ENCODE measurements at regions of chr7 and their contacts with region 1.

Region 1: DNA sequence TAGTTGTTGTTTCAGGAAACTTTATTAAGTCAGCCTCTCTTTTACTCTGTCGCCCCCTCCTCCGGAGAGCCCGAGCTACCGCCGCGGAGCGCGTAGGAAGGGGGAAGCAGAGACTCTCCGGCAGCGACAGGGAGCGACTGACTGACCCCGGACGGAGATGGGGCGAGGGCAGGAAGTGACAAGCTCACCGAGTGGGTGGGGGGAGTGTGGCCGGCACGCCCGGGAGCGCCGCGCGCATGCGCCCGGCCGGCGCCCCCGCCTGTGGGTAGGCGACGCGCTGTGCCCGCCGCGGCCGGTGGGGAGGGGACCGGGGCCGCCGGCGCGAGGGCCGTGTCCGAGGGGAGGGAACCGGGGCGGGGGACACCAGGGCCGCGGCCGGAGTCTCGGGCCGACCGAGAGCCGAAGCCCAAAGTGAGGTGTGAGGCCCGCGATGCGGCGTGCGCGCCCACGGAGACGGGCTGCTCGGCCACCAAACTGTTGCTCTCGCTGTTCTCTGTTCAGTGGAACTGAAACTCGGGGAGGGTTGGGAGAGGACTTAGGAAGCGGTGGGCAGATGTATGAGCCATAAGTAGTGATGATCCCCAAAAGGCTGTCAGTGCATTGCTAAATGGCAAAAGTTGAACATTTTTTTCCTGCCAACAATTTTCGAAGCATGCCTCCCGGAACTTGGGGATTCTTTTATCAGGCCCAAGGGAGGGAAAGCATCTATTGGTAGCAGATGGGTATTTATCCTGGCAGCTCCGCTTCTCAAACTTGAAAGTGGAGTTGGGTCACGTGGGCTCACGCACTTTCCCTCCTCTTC is at the start of gene ZNF800:
- DNase-seq: peak; percentile 73 to 94 (median 86)
- ATAC-seq: peak; percentile 76
- H3K4me3 ChIP-seq: peak within 1 kb of the TSS; percentile 87 to 92
- H3K4me3 Mint-ChIP-seq: peak within 1 kb of the TSS; percentile 96
- H3K27ac ChIP-seq: peak within 1 kb of the TSS; percentile 95 to 99
- H3K27ac Mint-ChIP-seq: peak within 1 kb of the TSS; percentile 98
- H3K4me1 ChIP-seq: peaks cover 45% of the 10 kb centered on the region
- H3K4me1 Mint-ChIP-seq: peaks cover 61% of the 10 kb centered on the region
- H3K27me3 ChIP-seq: no peaks in the 10 kb centered on the region
- H3K27me3 Mint-ChIP-seq: no peaks in the 10 kb centered on the region
- CTCF ChIP-seq: no peak
- total RNA-seq, gene ZNF800: 80.7 to 82.5 TPM

Region 2: DNA sequence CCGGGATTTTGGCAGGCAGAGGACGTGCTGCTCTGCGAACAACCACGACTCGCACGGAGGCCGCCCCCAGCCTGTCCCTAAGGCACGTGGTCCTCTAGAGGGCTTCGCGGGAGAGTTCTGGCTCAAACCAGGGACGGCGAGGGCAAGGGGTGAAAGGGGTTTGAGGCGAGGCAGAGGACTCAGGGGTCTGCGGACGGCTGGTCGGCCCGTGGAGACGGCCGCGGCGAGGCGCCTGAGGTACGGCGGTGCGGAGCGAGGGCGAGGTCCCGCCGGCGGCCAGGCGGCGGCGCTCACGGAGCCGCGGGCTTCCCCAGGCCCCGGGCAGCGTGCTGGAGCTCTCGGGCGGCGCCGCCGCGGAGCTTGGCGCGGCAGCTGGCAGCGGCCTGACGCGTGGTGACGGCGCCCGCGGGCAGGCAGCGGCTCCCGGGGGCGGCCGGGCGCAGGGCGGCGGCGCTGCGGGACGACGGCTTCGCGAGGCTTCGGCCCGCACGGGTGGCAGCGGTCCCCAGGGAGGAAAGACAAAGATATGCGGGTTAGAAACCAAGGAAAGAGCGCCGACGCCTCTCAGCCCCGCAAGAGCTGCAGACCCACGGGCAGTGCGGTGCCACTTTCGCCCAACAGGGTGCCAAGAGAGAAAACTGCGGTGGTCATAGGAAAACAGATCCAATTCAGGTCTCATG is 45.1 kb before region 1 on chr7:
- CTCF ChIA-PET with region 1: interaction called, 24 read pairs
- POLR2A ChIA-PET with region 1: interaction called, 18 read pairs
- intact Hi-C with region 1: loop called (anchors 2 to 5 kb)
- DNase-seq: peak; percentile 45 to 88 (median 71)
- ATAC-seq: peak; percentile 98
- H3K4me3 ChIP-seq: peak overlapping the region; percentile 26 to 34
- H3K4me3 Mint-ChIP-seq: peak overlapping the region; percentile 72
- H3K27ac ChIP-seq: no peak overlapping the region
- H3K27ac Mint-ChIP-seq: no peak overlapping the region
- H3K4me1 ChIP-seq: peaks cover 3% of the 10 kb centered on the region
- H3K4me1 Mint-ChIP-seq: peaks cover 22% of the 10 kb centered on the region
- H3K27me3 ChIP-seq: no peaks in the 10 kb centered on the region
- H3K27me3 Mint-ChIP-seq: no peaks in the 10 kb centered on the region
- CTCF ChIP-seq: peak; percentile 43

Region 3: DNA sequence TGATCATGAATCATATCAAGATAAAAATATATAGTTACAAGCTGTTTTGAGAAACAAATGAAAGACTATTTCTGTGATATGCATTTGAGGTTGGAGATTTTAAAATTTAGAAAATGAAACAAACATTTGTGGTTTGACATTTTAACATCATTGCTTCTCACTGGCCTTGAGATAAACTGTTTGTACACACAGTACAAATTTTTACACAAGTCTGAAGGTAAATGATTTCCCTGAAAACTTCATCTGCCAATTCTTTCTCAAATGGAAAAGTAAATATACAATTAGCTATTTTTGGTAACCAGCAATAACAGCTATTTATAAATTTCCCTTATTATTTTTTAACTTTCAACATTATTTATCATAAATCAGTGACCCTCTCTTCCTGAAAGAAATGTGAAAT is 38.9 kb before region 1 on chr7:
- CTCF ChIA-PET with region 1: interaction called, 24 read pairs
- POLR2A ChIA-PET with region 1: interaction called, 18 read pairs
- intact Hi-C with region 1: loop called (anchors 2 to 5 kb)
- DNase-seq: no peak
- ATAC-seq: no peak
- H3K4me3 ChIP-seq: no peak overlapping the region
- H3K4me3 Mint-ChIP-seq: no peak overlapping the region
- H3K27ac ChIP-seq: no peak overlapping the region
- H3K27ac Mint-ChIP-seq: no peak overlapping the region
- H3K4me1 ChIP-seq: no peaks in the 10 kb centered on the region
- H3K4me1 Mint-ChIP-seq: peaks cover 23% of the 10 kb centered on the region
- H3K27me3 ChIP-seq: no peaks in the 10 kb centered on the region
- H3K27me3 Mint-ChIP-seq: no peaks in the 10 kb centered on the region
- CTCF ChIP-seq: no peak

Region 4: DNA sequence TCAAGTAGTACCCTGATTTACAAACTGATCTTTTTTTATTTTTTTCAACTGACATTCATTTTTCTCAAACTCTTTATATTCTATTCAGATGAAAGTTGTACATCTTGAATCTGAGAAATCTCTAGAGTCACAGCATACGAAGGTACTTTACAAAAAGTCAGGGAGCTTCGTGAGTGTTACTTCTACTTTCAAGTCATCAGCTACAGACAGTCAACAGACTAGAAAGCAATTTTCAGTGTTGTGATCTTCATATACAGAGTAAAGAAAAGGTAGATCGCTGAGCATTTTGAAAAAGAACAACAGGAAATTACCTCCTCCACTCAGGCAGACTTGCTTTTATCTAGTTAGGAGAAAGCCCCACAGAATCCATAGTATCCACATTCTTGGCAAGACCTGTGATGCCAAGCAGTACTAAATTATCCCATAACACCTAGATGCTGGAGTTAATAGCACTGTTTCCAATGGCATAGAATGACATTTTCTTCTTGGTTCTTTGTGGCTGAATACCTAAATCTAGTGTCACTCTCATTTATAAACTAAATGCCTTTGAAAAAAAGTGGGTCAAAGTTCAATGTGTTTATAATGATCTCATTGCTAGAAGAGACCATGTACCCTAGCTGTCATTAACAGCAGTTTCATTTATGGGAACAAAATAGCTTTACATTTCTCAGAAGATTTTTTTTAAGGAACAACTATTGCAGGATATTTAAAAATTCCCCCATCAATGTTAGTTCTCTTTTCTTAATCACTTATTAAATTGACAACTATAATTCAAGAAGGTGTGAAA is 11.7 kb after region 1 on chr7:
- CTCF ChIA-PET with region 1: interaction called, 3 read pairs
- POLR2A ChIA-PET with region 1: interaction called, 36 read pairs
- intact Hi-C with region 1: no loop called
- DNase-seq: peak in 2 of 9 experiments; percentile 15 to 56
- ATAC-seq: peak; percentile 77
- H3K4me3 ChIP-seq: no peak overlapping the region
- H3K4me3 Mint-ChIP-seq: peak overlapping the region; percentile 20
- H3K27ac ChIP-seq: peak overlapping the region; percentile 3 to 21
- H3K27ac Mint-ChIP-seq: peak overlapping the region; percentile 84
- H3K4me1 ChIP-seq: peaks cover 28% of the 10 kb centered on the region
- H3K4me1 Mint-ChIP-seq: peaks cover 30% of the 10 kb centered on the region
- H3K27me3 ChIP-seq: no peaks in the 10 kb centered on the region
- H3K27me3 Mint-ChIP-seq: no peaks in the 10 kb centered on the region
- CTCF ChIP-seq: no peak

Region 5: GRCh38 chr7:127413962-127414361 is 21.2 kb after region 1 on chr7:
- CTCF ChIA-PET with region 1: interaction called, 8 read pairs
- POLR2A ChIA-PET with region 1: interaction called, 29 read pairs
- intact Hi-C with region 1: loop called (anchors 1 kb)
- DNase-seq: peak in 2 of 9 experiments; percentile 52 to 77
- ATAC-seq: peak; percentile 79
- H3K4me3 ChIP-seq: peak overlapping the region in 1 of 2 experiments; percentile 12
- H3K4me3 Mint-ChIP-seq: peak overlapping the region; percentile 71
- H3K27ac ChIP-seq: peak overlapping the region; percentile 26 to 77
- H3K27ac Mint-ChIP-seq: peak overlapping the region; percentile 97
- H3K4me1 ChIP-seq: peaks cover 56% of the 10 kb centered on the region
- H3K4me1 Mint-ChIP-seq: peaks cover 68% of the 10 kb centered on the region
- H3K27me3 ChIP-seq: no peaks in the 10 kb centered on the region
- H3K27me3 Mint-ChIP-seq: no peaks in the 10 kb centered on the region
- CTCF ChIP-seq: no peak

Region 6: DNA sequence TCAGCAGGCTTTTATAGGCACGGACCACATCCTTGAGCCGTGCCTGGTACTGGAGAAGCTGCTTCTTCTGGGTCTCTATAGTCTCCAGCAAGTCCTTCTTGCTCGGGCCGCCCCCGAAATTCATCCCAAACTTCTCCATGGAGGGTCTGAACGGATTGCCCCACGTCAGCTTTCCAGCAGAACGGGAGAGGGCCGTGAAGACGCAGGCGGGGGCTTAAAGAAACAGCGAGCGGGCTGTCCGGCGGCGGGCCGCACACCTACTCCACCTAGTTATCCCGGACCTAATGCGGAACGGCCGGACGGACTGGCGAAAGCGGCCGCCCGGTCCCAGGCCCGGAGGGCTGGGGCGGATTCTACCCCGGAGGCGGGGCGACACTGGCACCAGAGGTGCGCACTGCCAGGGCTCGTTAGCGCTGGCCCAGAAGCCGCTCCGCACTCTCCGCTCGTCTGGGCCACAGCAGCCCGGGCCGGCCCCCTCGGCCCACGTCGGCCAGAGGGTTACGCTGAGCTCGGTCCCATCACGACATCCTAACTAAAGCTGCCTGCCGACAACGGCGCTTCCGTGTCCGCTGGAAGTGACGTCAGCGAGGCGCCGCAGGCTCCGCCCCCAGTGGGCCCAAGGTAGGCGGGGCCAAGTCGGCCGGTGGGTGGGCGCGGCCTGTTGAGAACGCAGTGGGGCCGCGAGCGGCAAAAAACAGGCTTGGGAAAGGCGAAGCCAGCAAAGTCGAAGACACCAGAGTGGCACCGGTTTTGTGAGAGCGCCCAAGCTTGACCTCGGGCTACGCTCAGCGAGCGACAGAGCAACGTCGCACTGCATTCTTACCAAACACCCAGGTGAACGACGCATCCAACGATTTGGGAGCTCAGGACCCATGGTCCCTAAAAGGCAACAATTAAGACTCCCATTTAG is 192.5 kb after region 1 on chr7 and contains the start of gene GCC1:
- CTCF ChIA-PET with region 1: no interaction called
- POLR2A ChIA-PET with region 1: interaction called, 6 read pairs
- intact Hi-C with region 1: loop called (anchors 5 kb)
- DNase-seq: peak; percentile 89 to 98 (median 94)
- ATAC-seq: peak; percentile 83
- H3K4me3 ChIP-seq: peak within 1 kb of the TSS; percentile 91 to 99
- H3K4me3 Mint-ChIP-seq: peak within 1 kb of the TSS; percentile 92
- H3K27ac ChIP-seq: peak within 1 kb of the TSS; percentile 94 to 95
- H3K27ac Mint-ChIP-seq: peak within 1 kb of the TSS; percentile 93
- H3K4me1 ChIP-seq: peaks cover 71% of the 10 kb centered on the region
- H3K4me1 Mint-ChIP-seq: peaks cover 79% of the 10 kb centered on the region
- H3K27me3 ChIP-seq: no peaks in the 10 kb centered on the region
- H3K27me3 Mint-ChIP-seq: no peaks in the 10 kb centered on the region
- CTCF ChIP-seq: no peak
- total RNA-seq, gene GCC1: 33.8 to 36.6 TPM

Region 7: DNA sequence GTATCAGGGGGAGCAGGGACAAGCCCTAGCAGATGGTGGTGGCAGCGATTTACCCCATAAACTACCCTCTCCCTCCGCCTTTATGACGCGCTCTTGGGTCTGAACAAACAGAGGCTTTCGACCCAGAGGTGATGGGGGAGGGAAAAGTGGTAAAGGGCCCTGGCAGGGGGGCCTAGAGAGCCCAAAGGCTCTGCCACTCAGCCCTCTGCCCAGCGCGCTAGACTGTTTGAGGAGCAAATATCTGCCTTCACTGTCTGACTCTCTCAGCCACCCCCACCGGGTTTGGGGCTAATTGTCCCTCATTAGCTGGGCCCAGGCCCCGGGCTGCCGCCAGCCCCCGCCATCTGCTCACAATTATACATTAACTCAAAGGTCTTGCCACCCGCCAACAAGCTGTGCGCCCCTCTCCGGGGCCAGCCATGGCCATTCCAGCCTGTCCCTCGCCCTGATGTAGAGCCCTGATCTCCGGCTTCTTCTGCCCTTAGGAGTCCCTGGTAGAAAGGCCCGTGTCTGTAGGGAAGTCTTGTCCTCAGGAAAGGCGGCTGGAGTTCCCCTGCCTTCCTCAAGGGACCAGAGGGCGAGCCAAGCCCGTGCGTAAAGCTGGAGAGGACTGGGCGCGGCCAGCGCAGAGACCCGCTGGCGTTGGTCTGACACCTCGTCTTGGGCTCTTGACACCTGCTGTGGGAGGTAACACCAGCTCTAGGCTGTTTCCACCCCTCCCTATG is 227.1 kb after region 1 on chr7:
- CTCF ChIA-PET with region 1: no interaction called
- POLR2A ChIA-PET with region 1: no interaction called
- intact Hi-C with region 1: no loop called
- DNase-seq: peak in 1 of 9 experiments; percentile 10
- ATAC-seq: no peak
- H3K4me3 ChIP-seq: no peak overlapping the region
- H3K4me3 Mint-ChIP-seq: no peak overlapping the region
- H3K27ac ChIP-seq: no peak overlapping the region
- H3K27ac Mint-ChIP-seq: no peak overlapping the region
- H3K4me1 ChIP-seq: no peaks in the 10 kb centered on the region
- H3K4me1 Mint-ChIP-seq: peaks cover 6% of the 10 kb centered on the region
- H3K27me3 ChIP-seq: peaks cover 3 to 10% of the 10 kb centered on the region in 2 experiments
- H3K27me3 Mint-ChIP-seq: peaks cover 60% of the 10 kb centered on the region
- CTCF ChIP-seq: no peak

Region 8: GRCh38 chr7:127651556-127652332 is 259.0 kb after region 1 on chr7 and contains the start of gene SND1:
- CTCF ChIA-PET with region 1: no interaction called
- POLR2A ChIA-PET with region 1: no interaction called
- intact Hi-C with region 1: loop called (anchors 1 to 5 kb)
- DNase-seq: peak; percentile 96 to 100 (median 98)
- ATAC-seq: peak; percentile 94
- H3K4me3 ChIP-seq: peak within 1 kb of the TSS; percentile 82 to 98
- H3K4me3 Mint-ChIP-seq: peak within 1 kb of the TSS; percentile 98
- H3K27ac ChIP-seq: peak within 1 kb of the TSS; percentile 92 to 98
- H3K27ac Mint-ChIP-seq: peak within 1 kb of the TSS; percentile 99
- H3K4me1 ChIP-seq: peaks cover 35% of the 10 kb centered on the region
- H3K4me1 Mint-ChIP-seq: peaks cover 50% of the 10 kb centered on the region
- H3K27me3 ChIP-seq: no peaks in the 10 kb centered on the region
- H3K27me3 Mint-ChIP-seq: no peaks in the 10 kb centered on the region
- CTCF ChIP-seq: no peak
- total RNA-seq, gene SND1: 87.7 to 101 TPM

Measured in CD8-positive, alpha-beta T cell (primary cell).